Activated CD4-positive, alpha-beta memory T cell treated with anti-CD3 and anti-CD28 coated beads for 36 hours (primary cell): ENCODE measurements at regions of chr5 and their contacts with region 1.

Region 1: DNA sequence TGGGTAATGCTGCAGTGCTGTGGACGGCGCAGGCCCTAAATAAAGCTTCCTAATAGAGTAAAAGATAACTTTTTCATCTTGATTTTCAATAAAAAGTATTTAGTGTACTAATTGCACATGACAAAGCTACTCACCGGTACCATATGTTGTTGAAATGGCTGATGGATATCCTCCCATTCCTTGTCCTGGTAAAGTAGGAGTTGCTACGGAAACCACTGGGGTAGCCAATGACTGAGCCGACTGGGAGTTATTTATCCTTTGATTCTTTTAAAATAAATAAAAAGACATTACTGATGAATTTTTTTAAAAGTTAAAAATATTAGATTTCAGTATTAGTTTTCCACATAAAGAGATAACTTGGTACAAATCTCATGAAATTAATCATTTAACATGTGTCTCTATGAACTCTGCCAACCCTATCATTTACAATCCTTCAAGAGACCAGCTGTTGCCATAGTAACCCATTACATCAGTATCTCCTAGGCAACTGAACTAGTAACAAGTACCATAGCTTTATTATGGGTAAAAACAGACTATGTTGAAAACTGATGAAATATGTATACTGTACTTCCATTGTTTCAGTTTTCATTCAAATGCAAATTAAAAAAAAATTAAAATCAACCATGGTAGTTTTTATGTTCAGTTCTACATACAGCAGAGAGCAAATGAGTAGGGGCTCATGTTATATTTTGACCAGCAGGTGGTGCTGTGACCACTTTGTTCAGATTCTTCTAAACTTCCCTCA is 153.7 kb downstream of the MEF2C start:
- DNase-seq: peak; percentile 62
- H3K4me3 Mint-ChIP-seq: no peak overlapping the region
- H3K27ac Mint-ChIP-seq: no peak overlapping the region
- H3K4me1 Mint-ChIP-seq: peaks cover 2% of the 10 kb centered on the region
- H3K27me3 Mint-ChIP-seq: peaks cover 13% of the 10 kb centered on the region

Region 2: GRCh38 chr5:88713818-88714217 is 15.4 kb before region 1 on chr5:
- CTCF ChIA-PET with region 1: interaction called, 10 read pairs
- POLR2A ChIA-PET with region 1: no interaction called
- intact Hi-C with region 1: no loop called
- DNase-seq: no peak
- H3K4me3 Mint-ChIP-seq: no peak overlapping the region
- H3K27ac Mint-ChIP-seq: no peak overlapping the region
- H3K4me1 Mint-ChIP-seq: no peaks in the 10 kb centered on the region
- H3K27me3 Mint-ChIP-seq: peaks cover 23% of the 10 kb centered on the region

Region 3: DNA sequence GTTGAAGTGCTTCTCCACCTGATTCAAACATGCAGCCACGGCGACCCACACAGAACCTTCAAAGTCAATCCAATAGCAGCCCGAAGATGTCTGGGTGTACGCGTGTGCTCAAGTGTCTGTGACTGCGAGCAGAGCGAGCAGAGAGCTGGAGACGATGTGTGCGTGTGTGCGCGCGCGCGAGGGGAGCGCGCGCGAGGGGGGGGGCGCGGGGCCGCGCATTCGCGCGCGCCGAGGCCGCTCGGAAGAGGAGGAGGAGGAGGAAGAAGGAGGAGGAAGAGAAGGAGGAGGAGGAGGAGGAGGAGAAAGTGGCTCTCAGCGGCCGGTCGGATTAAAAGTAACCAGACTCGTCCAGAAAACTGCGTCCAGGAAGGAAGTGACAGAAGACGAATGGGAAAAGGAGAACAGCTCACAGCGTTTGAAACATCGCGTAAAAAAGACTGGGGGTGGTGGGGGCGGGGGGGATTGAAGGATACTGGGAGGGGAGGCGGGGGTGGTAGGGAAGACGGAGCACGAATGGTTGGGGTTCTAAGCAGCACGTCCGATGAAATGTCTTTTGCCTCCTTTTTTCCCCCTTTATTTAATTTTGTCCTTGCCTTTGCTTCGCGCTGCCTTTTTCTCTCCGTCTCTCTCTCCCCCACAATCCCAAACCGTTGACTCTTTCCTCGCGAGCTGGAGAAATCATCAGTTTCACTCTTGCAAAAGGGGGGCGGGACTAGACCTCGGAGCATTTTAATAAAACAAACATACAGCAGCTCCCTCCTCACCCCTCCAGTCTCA is 154.0 kb after region 1 on chr5 and contains the start of gene MEF2C:
- CTCF ChIA-PET with region 1: interaction called, 3 read pairs
- POLR2A ChIA-PET with region 1: no interaction called
- intact Hi-C with region 1: loop called (anchors 10 kb)
- DNase-seq: peak; percentile 13
- H3K4me3 Mint-ChIP-seq: peak within 1 kb of the TSS; percentile 72
- H3K27ac Mint-ChIP-seq: no peak within 1 kb of the TSS
- H3K4me1 Mint-ChIP-seq: peaks cover 19% of the 10 kb centered on the region
- H3K27me3 Mint-ChIP-seq: peaks cover 45% of the 10 kb centered on the region
- total RNA-seq, gene MEF2C: 0.02 TPM

Region 4: GRCh38 chr5:90386099-90386710 is 1656.9 kb after region 1 on chr5:
- CTCF ChIA-PET with region 1: interaction called, 5 read pairs
- POLR2A ChIA-PET with region 1: no interaction called
- intact Hi-C with region 1: loop called (anchors 5 kb)
- DNase-seq: no peak
- H3K4me3 Mint-ChIP-seq: no peak overlapping the region
- H3K27ac Mint-ChIP-seq: no peak overlapping the region
- H3K4me1 Mint-ChIP-seq: no peaks in the 10 kb centered on the region
- H3K27me3 Mint-ChIP-seq: peaks cover 15% of the 10 kb centered on the region

Region 5: DNA sequence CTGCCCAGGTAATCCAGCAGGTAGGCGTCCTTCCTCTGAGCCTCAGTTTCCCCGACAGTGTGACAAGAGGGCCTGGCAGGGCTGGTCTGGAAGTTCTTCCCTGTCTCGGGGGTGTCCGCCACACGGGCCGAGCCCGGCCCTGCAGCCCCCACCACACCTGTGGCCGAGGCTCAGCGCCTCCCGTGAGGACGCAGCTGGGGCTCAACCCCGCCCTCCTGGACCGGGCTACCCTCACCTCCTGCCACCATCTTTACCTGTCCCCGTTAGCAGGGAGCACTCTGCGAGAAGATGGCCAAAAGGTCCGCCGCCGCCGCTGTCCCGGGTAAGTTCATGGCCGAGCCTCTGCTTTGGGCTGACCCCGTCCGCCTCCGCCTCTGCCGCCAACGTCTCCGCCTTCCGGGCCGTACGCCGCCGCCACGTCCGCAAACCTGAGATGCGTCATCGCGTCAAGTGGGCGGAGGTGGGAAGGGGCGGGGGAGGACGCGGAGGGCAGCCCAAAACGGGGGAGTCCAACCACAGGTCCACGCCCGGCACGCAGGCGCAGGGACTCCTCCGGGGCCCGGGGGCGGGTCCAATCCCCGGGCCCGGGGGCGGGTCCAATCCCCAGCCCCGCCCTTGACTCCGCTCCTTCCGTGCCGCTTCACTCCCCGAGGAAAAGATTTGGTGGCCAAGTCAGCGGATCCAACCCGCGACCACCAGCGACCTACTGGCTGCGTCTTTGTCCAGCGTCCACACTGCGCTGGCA is 1800.1 kb after region 1 on chr5 and contains the start of gene LYSMD3:
- CTCF ChIA-PET with region 1: interaction called, 8 read pairs
- POLR2A ChIA-PET with region 1: no interaction called
- intact Hi-C with region 1: loop called (anchors 5 kb)
- DNase-seq: peak; percentile 97
- H3K4me3 Mint-ChIP-seq: peak within 1 kb of the TSS; percentile 100
- H3K27ac Mint-ChIP-seq: peak within 1 kb of the TSS; percentile 96
- H3K4me1 Mint-ChIP-seq: peaks cover 24% of the 10 kb centered on the region
- H3K27me3 Mint-ChIP-seq: peaks cover 10% of the 10 kb centered on the region
- total RNA-seq, gene LYSMD3: 12.6 to 13.0 TPM